OCI-LY7 (cell line): ENCODE measurements at regions of chr5 and their contacts with region 1.

Region 1: DNA sequence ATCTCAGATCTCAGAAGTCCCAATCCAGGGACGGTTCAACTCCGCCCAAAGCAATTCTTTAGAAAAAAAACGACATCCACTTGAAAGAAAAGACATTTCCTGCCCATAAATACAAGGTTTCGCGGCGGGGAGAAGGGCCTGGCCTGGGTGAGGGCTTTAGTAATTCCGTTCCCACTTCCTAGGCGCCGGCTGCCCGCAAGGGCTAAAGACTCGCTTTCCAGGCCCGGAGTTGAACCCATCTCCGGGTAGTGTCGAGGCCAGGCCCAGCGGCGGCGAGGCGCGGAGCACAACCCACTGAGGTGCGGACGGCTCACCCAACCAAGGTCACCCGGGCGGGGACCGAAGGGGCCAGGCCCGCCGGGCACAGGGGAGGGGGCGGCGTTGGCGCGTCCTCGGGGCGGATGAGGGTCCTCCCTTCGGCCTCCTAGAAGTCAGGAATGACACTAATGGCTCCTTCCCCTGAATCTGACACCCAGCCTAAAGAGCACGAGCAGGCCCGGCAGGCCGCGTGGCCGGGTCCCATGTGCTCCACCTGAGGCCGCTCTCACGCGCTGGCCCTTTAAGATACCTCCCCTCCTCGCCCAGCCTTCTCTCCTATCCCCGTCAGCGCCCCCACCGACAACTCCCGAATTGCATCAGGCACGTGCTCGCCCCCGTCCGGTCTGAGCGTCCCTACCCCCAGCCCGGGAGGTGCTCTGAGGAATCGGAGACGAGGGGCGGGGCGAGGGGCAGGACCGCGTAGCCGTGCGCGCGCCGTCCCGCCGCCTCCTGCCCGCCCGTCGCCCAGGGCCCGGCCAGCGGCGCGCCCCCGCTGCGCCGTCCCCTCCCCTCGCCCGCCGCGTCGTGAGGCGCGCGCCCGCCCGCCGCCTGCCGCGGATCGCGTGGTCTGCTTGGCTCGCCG is 467 bp upstream of the LARP1 start:
- DNase-seq: peak; percentile 99
- H3K4me3 ChIP-seq: peak overlapping the region; percentile 84
- H3K27ac ChIP-seq: peak overlapping the region; percentile 69
- H3K4me1 ChIP-seq: peaks cover 34% of the 10 kb centered on the region
- CTCF ChIP-seq: peak; percentile 59

Region 2: GRCh38 chr5:154445422-154446182 is 309.1 kb before region 1 on chr5 and contains the start of gene SAP30L:
- CTCF ChIA-PET with region 1: no interaction called
- POLR2A ChIA-PET with region 1: no interaction called
- intact Hi-C with region 1: loop called (anchors 10 kb)
- DNase-seq: peak; percentile 96
- H3K4me3 ChIP-seq: peak within 1 kb of the TSS; percentile 78
- H3K27ac ChIP-seq: peak within 1 kb of the TSS; percentile 18
- H3K4me1 ChIP-seq: peaks cover 15% of the 10 kb centered on the region
- CTCF ChIP-seq: no peak
- total RNA-seq, gene SAP30L: 33.2 and 38.7 TPM in 2 replicates

Region 3: GRCh38 chr5:154654486-154655371 is 100.0 kb before region 1 on chr5:
- CTCF ChIA-PET with region 1: no interaction called
- POLR2A ChIA-PET with region 1: interaction called, 5 read pairs
- intact Hi-C with region 1: loop called (anchors 5 kb)
- DNase-seq: no peak
- H3K4me3 ChIP-seq: no peak overlapping the region
- H3K27ac ChIP-seq: no peak overlapping the region
- H3K4me1 ChIP-seq: no peaks in the 10 kb centered on the region
- CTCF ChIP-seq: no peak

Region 4: DNA sequence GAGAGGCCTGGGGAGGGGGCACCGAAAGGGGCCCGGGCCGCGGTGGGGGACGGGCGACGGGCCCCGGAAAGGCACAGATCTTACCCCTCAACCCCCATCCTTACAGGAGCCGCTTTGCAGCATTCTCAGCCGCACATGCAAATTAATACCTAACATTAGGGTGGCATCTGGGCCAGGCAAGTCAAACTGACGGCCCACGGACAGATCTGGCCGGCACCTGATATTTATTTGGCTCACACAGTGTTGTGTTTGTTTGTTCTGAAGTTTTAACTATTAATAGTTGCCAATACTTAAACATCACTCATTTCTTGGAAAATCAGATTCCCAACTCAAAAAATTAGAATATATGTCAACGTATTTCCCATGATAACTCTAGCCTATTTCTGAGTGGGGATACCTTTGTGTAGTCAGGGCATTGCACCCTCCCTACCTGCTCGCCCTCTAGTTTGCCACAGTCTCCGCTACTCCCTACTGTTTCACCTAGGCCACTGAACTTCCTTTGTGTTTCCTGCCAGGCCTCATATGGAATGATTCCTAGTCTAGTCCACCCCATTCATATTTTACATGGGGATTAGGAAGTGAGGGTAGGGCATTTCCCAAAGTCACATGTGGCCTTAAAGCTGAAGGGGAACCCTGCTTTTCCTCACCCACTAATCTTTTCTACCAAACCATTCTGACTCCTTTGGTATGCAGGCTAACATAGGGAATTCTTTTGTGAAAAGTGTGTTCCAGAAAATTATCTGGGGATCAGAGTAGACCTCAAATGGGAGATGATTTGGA is 71.4 kb before region 1 on chr5:
- CTCF ChIA-PET with region 1: interaction called, 3 read pairs
- POLR2A ChIA-PET with region 1: interaction called, 3 read pairs
- intact Hi-C with region 1: loop called (anchors 1 kb)
- DNase-seq: peak; percentile 70
- H3K4me3 ChIP-seq: peak overlapping the region; percentile 67
- H3K27ac ChIP-seq: peak overlapping the region; percentile 78
- H3K4me1 ChIP-seq: peaks cover 21% of the 10 kb centered on the region
- CTCF ChIP-seq: no peak

Region 5: GRCh38 chr5:154767576-154767975 is 12.9 kb after region 1 on chr5:
- CTCF ChIA-PET with region 1: interaction called, 3 read pairs
- POLR2A ChIA-PET with region 1: interaction called, 11 read pairs
- intact Hi-C with region 1: no loop called
- DNase-seq: no peak
- H3K4me3 ChIP-seq: no peak overlapping the region
- H3K27ac ChIP-seq: peak overlapping the region; percentile 24
- H3K4me1 ChIP-seq: peaks cover 73% of the 10 kb centered on the region
- CTCF ChIP-seq: no peak

Region 6: DNA sequence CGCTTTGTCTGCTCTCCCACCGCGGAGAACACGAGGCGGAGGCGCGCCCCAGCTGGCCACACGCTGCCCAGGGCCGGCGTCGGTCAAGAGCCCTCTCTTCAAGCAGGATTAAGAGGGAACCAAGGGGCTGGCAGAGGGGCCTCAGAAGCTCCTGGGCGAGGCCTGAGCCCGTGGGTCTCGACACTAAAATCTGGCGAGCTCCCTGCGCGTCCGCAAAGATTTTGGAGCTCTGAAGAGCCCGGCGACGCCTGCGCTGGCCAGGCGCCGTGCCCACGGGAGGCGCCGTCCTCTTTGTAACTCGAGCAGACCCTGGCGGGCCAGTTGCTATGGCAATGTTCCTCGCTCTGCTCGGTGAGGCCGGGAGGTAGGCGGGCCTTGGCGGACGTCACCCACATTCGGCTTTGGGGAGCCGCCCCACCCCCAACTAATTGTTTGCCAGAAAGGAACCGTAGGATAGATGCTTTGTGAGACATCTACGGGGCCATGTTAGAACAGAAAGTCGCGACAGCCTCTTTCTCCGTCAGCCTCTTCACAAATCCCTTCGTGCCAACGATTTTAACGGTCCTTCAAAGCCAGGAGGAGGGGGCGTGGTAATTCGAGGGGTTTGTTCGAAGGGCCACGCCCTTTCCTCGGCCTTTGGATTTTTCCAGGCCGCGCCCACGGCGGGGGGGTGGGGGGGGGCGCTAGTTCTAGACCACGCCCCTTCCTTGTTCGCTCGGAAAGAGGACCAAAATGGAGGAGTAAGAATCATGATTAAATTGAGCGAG is 103.0 kb after region 1 on chr5:
- CTCF ChIA-PET with region 1: no interaction called
- POLR2A ChIA-PET with region 1: interaction called, 5 read pairs
- intact Hi-C with region 1: loop called (anchors 1 kb)
- DNase-seq: peak; percentile 93
- H3K4me3 ChIP-seq: peak overlapping the region; percentile 97
- H3K27ac ChIP-seq: peak overlapping the region; percentile 89
- H3K4me1 ChIP-seq: peaks cover 34% of the 10 kb centered on the region
- CTCF ChIP-seq: no peak

Region 7: DNA sequence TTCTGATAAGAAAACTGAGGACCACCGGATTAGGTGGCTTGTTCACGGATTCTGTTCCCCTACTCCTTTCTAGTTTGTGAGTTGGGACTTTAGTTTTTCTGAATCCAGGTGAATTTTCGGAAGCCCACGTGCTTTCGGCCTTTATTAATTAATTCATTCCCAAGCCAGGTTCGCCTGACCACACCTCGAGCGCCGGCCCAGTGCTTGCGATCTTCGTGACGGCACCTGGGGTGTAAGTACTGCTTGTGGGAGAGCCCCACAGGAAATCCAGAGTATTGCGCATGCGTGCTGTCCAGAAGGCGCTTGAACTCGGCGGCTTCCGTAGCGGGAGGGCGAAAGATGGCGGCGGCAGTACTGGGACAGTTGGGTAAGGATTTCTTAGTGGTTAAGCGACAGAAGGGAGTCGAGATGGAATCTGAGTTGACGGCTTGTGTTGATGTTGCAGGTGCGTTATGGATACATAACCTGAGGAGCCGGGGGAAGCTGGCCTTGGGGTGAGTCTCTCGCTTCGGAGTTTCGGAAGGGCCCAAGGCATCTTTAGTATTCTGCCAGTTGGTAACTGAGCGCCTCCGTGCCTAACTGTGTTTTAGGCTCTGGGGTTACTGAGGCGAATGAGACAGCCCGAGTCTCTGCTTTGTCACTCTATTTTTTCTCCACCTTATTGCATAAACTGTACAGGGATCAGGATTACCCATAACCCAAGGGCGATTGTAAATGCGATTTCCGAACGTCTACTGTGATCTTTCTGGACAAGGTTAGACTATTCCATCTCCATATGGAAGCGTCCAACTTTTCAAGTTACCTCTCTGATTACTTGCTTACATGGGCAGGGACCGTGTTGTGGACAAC is 186.3 kb after region 1 on chr5 and contains the start of gene MRPL22:
- CTCF ChIA-PET with region 1: no interaction called
- POLR2A ChIA-PET with region 1: interaction called, 3 read pairs
- intact Hi-C with region 1: loop called (anchors 5 kb)
- DNase-seq: peak; percentile 94
- H3K4me3 ChIP-seq: peak within 1 kb of the TSS; percentile 95
- H3K27ac ChIP-seq: peak within 1 kb of the TSS; percentile 72
- H3K4me1 ChIP-seq: peaks cover 47% of the 10 kb centered on the region
- CTCF ChIP-seq: no peak
- total RNA-seq, gene MRPL22: 34.0 and 48.9 TPM in 2 replicates